ENCODE measurements at regions of chr4 and their contacts with region 1.

Region 1: DNA sequence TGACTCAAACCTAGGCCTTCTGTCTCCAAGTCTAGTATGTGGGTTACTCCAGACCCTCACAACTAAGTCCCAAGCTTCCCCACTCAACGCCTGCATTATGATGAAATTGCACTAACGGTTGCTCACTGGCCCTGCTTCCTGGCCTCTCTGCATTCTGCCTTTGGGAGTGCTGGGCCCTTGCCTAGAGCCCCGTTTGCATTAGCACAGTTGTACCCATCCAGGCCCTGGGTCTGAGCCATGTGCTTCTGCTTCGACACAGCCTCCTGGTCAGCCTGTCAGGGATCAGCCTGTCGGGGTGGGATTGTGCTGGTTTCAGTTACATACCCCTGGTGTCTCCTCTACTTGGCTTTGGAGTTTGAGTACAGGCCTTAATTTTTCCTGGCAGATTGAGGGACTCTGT is 58.4 kb downstream of the DCUN1D4 start:
- DNase-seq: no peak
- ATAC-seq: no peak
- H3K4me3 ChIP-seq: no peak overlapping the region
- H3K4me3 Mint-ChIP-seq: no peak overlapping the region
- H3K27ac ChIP-seq: no peak overlapping the region
- H3K27ac Mint-ChIP-seq: peak overlapping the region in 1 of 2 donors; percentile 37
- H3K4me1 ChIP-seq: peaks cover 2% of the 10 kb centered on the region
- H3K4me1 Mint-ChIP-seq: peaks cover 0 to 17% of the 10 kb centered on the region in 2 donors
- H3K27me3 ChIP-seq: no peaks in the 10 kb centered on the region
- H3K27me3 Mint-ChIP-seq: no peaks in the 10 kb centered on the region
- CTCF ChIP-seq: no peak

Region 2: DNA sequence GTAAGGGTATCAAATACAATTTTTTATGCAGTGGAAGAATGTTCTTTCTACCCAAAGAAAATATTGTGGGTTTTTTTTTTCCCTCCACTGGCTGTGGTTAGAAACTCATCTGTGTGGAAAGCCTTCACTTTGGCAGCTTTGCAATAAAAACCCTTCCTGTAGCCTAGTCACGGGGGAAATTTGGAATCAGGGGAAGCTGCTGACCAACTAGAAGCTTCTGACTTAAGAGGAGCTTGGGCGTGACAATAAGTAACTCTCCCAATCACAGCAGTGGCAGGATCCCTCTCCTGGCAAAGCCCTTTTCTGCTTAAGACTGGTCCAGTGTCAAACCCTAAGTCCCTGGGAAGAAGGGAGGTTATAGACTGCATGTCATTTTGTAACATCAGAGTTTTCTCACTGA is 30.9 kb after region 1 on chr4:
- intact Hi-C with region 1: loop called (anchors 1 kb)
- DNase-seq: no peak
- ATAC-seq: no peak
- H3K4me3 ChIP-seq: no peak overlapping the region
- H3K4me3 Mint-ChIP-seq: no peak overlapping the region
- H3K27ac ChIP-seq: no peak overlapping the region
- H3K27ac Mint-ChIP-seq: no peak overlapping the region
- H3K4me1 ChIP-seq: no peaks in the 10 kb centered on the region
- H3K4me1 Mint-ChIP-seq: no peaks in the 10 kb centered on the region
- H3K27me3 ChIP-seq: no peaks in the 10 kb centered on the region
- H3K27me3 Mint-ChIP-seq: no peaks in the 10 kb centered on the region
- CTCF ChIP-seq: no peak